ENCODE measurements at regions of chrX and their contacts with region 1.

Region 1: GRCh38 chrX:107672955-107673378 is 44.7 kb downstream of the PRPS1 start:
- DNase-seq: peak; percentile 67 to 94 (median 78)
- ATAC-seq: peak; percentile 45
- H3K4me3 ChIP-seq: peak overlapping the region; percentile 33
- H3K4me3 Mint-ChIP-seq: peak overlapping the region; percentile 87
- H3K27ac ChIP-seq: peak overlapping the region; percentile 97 to 98
- H3K27ac Mint-ChIP-seq: peak overlapping the region; percentile 99
- H3K4me1 ChIP-seq: peaks cover 59% of the 10 kb centered on the region
- H3K4me1 Mint-ChIP-seq: peaks cover 51% of the 10 kb centered on the region
- H3K27me3 ChIP-seq: no peaks in the 10 kb centered on the region
- H3K27me3 Mint-ChIP-seq: no peaks in the 10 kb centered on the region
- CTCF ChIP-seq: peak; percentile 58

Region 2: GRCh38 chrX:107542500-107542899 is 130.5 kb before region 1 on chrX:
- CTCF ChIA-PET with region 1: no interaction called
- POLR2A ChIA-PET with region 1: no interaction called
- intact Hi-C with region 1: no loop called
- DNase-seq: no peak
- ATAC-seq: no peak
- H3K4me3 ChIP-seq: no peak overlapping the region
- H3K4me3 Mint-ChIP-seq: no peak overlapping the region
- H3K27ac ChIP-seq: no peak overlapping the region
- H3K27ac Mint-ChIP-seq: no peak overlapping the region
- H3K4me1 ChIP-seq: no peaks in the 10 kb centered on the region
- H3K4me1 Mint-ChIP-seq: no peaks in the 10 kb centered on the region
- H3K27me3 ChIP-seq: no peaks in the 10 kb centered on the region
- H3K27me3 Mint-ChIP-seq: no peaks in the 10 kb centered on the region
- CTCF ChIP-seq: no peak

Region 3: DNA sequence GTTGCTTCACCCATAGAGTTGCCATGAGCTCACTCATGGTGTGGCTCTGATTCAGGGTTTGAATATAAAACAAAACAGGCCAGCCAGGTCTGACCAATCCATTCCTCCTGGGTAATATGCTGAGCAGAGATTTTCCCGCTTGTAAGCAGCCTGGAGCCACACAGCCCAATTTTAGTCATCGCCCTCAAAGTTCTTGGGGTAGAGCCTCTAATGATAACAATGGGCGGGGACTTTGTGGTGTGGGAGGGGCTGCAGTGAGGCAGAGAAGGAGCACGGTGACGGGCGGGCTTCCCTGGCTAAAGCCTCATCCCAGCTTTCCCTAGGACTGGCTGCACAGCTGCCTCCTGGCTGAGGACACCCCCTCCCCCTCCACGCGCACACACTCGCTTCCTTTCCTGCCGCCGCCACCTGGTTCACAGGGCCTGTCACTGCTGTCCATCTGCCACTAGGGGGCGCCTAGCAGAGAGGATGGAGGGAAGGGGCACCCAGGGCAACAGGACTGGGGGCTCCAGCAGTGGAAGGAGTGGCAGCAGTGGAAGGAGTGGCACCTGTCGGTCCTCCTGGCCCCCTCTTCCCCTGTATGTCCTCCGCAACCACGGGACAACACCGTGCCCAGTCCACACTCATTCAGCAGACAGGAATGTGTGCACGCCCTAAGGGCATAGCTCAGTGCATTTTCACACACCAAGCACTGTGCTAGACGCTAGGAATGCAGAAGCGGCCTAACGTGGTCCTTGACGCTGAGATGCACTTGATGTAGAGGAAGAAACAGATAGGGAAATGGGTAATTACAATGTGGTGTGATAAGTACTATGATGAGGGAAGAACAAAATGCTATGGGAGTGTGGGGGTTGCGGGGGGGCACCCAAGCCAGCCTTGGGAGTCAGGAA is 17.9 kb before region 1 on chrX:
- CTCF ChIA-PET with region 1: interaction called, 29 read pairs
- POLR2A ChIA-PET with region 1: interaction called, 12 read pairs
- intact Hi-C with region 1: no loop called
- DNase-seq: peak; percentile 49 to 81 (median 64)
- ATAC-seq: peak; percentile 92
- H3K4me3 ChIP-seq: no peak overlapping the region
- H3K4me3 Mint-ChIP-seq: no peak overlapping the region
- H3K27ac ChIP-seq: no peak overlapping the region
- H3K27ac Mint-ChIP-seq: peak overlapping the region; percentile 13
- H3K4me1 ChIP-seq: peaks cover 12% of the 10 kb centered on the region
- H3K4me1 Mint-ChIP-seq: peaks cover 29% of the 10 kb centered on the region
- H3K27me3 ChIP-seq: no peaks in the 10 kb centered on the region
- H3K27me3 Mint-ChIP-seq: no peaks in the 10 kb centered on the region
- CTCF ChIP-seq: peak; percentile 72

Region 4: DNA sequence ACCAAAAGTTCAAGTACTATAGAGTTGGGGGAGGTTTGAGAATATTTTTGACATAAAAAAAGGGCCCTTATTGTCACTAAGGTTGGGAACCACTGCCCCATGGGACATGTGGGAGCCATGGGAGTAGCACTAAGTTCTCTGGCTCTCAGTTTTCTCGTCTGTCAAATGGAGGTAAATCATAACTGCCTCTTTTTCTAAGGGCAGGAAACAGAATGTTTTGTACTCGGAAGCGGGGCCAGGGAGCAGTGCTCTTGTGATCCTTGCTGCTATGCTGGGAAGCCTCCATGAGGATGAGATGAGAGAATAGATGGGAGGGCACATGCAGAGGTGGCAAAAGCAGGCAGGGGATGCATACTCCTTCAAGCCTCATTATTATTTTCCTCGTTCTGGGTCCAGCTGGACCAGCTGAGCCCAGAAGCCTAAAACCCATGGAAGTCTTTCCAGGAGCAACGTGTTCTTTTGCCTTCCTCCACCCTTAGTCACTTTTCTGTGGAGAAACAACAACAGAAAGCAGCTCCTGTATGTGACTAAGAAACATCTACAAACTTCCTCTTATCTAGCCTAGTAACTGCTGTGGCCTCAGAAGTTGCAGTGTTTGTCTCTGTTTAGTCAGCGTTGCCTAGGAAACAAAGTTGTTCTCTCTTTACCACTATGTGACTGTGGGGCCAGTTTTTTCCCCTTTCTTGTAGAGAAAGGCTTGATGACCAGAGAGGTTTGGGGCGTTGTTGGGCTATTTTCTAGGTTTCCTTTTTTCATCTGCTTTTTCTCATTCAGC is 37.8 kb after region 1 on chrX:
- CTCF ChIA-PET with region 1: interaction called, 261 read pairs
- POLR2A ChIA-PET with region 1: interaction called, 754 read pairs
- intact Hi-C with region 1: loop called in 1 of 2 experiments (anchors 1 kb)
- DNase-seq: peak in 11 of 14 experiments; percentile 16 to 94 (median 43)
- ATAC-seq: peak; percentile 36
- H3K4me3 ChIP-seq: peak overlapping the region; percentile 21
- H3K4me3 Mint-ChIP-seq: peak overlapping the region; percentile 97
- H3K27ac ChIP-seq: peak overlapping the region; percentile 90 to 95
- H3K27ac Mint-ChIP-seq: peak overlapping the region; percentile 99
- H3K4me1 ChIP-seq: peaks cover 65% of the 10 kb centered on the region
- H3K4me1 Mint-ChIP-seq: peaks cover 68% of the 10 kb centered on the region
- H3K27me3 ChIP-seq: no peaks in the 10 kb centered on the region
- H3K27me3 Mint-ChIP-seq: no peaks in the 10 kb centered on the region
- CTCF ChIP-seq: no peak

Region 5: DNA sequence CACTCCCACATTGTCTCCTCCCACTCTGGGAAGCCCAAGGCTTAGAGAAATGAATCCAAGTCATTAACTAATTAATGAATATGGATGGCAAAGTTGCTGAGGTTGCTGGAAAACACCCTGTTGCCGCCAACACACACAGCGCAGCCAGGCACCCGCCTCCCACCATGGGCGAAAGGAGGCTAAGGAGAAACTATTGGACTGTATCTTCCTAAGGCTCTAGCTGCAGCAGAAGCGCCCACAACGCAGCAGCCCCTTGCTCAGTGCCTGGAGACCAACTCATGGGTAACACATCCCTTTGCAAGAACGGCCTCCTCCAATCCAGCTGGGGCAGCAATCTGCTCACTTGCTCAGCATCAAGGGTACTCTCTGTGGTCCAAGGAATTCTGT is 68.4 kb after region 1 on chrX:
- CTCF ChIA-PET with region 1: interaction called, 29 read pairs
- POLR2A ChIA-PET with region 1: interaction called, 96 read pairs
- intact Hi-C with region 1: loop called in 1 of 2 experiments (anchors 2 kb)
- DNase-seq: peak in 2 of 14 experiments; percentile 3 to 5
- ATAC-seq: peak; percentile 10
- H3K4me3 ChIP-seq: peak overlapping the region; percentile 17
- H3K4me3 Mint-ChIP-seq: peak overlapping the region; percentile 88
- H3K27ac ChIP-seq: peak overlapping the region; percentile 46 to 82
- H3K27ac Mint-ChIP-seq: peak overlapping the region; percentile 98
- H3K4me1 ChIP-seq: peaks cover 61% of the 10 kb centered on the region
- H3K4me1 Mint-ChIP-seq: peaks cover 47% of the 10 kb centered on the region
- H3K27me3 ChIP-seq: no peaks in the 10 kb centered on the region
- H3K27me3 Mint-ChIP-seq: peaks cover 7% of the 10 kb centered on the region
- CTCF ChIP-seq: no peak

Region 6: GRCh38 chrX:108049649-108050048 is 376.7 kb after region 1 on chrX:
- CTCF ChIA-PET with region 1: no interaction called
- POLR2A ChIA-PET with region 1: no interaction called
- intact Hi-C with region 1: no loop called
- DNase-seq: no peak
- ATAC-seq: no peak
- H3K4me3 ChIP-seq: no peak overlapping the region
- H3K4me3 Mint-ChIP-seq: no peak overlapping the region
- H3K27ac ChIP-seq: no peak overlapping the region
- H3K27ac Mint-ChIP-seq: no peak overlapping the region
- H3K4me1 ChIP-seq: no peaks in the 10 kb centered on the region
- H3K4me1 Mint-ChIP-seq: peaks cover 17% of the 10 kb centered on the region
- H3K27me3 ChIP-seq: no peaks in the 10 kb centered on the region
- H3K27me3 Mint-ChIP-seq: no peaks in the 10 kb centered on the region
- CTCF ChIP-seq: no peak